Activated CD4-positive, alpha-beta T cell treated with anti-CD3 and anti-CD28 coated beads, Interleukin-2, amount 10 ng/mL, durations not matched to agents 24 days and 14 days (primary cell): ENCODE measurements at regions of chr13 and their contacts with region 1.

Region 1: DNA sequence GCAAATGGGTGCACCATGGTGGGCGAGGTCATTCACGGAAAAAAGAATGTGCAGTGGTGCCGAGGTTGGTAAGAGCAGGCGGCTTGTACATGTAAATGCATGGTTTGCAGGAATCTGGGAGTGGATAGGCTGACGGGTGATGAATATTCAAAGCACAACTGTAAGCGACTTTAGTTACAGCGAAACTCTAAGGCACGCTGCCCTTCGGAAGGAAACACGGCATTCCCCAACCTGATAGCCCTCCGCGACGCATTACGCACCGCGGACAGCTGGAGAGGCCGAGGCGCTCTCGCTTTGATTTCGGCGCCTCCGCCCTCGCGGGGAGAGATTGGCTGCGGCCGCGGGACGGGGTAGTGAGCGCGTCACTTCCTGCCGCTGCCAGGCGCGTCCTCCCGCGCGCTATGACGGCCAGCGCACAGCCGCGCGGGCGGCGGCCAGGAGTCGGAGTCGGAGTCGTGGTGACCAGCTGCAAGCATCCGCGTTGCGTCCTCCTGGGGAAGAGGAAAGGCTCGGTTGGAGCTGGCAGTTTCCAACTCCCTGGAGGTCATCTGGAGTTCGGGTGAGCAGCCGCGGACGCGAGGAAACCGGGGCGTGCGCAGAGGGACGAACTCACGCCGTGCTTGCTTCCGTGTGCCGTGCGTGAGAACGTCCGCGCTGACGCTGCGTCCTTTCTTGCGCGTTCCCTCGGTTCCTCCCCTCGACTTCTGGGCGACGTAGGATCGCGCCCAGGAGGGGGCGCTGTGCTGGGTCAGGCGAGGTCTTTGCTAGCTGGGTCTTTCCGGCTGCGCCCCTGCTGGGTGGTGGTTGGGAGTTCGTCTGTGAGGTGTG is at the start of gene NUDT15:
- DNase-seq: peak; percentile 99
- H3K4me3 Mint-ChIP-seq: peak within 1 kb of the TSS; percentile 98
- H3K27ac Mint-ChIP-seq: peak within 1 kb of the TSS; percentile 99
- H3K4me1 Mint-ChIP-seq: peaks cover 30% of the 10 kb centered on the region
- H3K27me3 Mint-ChIP-seq: no peaks in the 10 kb centered on the region
- total RNA-seq, gene NUDT15: 18.2 and 19.1 TPM in 2 replicates

Region 2: DNA sequence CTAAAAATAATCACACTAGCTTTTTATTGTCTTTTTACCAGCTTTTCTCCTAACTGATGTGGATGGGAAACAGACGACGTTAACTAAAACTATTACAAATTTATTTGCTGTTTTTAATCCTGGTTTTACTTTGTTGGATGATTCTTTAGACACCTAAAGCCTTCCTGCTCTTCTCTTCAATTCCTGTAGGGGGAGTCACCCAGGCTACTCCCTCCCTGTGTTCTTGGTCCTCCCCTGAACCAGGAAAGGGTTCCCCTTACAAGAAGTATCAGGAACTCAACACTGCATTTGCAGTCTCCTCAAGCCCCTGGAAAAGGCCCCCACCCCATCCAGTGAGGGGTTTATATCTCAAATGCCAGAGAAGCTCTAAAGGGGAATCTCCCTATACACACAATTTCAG is 242.6 kb before region 1 on chr13:
- intact Hi-C with region 1: no loop called
- DNase-seq: no peak
- H3K4me3 Mint-ChIP-seq: no peak overlapping the region
- H3K27ac Mint-ChIP-seq: no peak overlapping the region
- H3K4me1 Mint-ChIP-seq: no peaks in the 10 kb centered on the region
- H3K27me3 Mint-ChIP-seq: no peaks in the 10 kb centered on the region

Region 3: GRCh38 chr13:48000778-48001628 is 36.6 kb before region 1 on chr13 and contains the start of gene SUCLA2:
- intact Hi-C with region 1: loop called (anchors 1 kb)
- DNase-seq: peak; percentile 98
- H3K4me3 Mint-ChIP-seq: peak within 1 kb of the TSS; percentile 94
- H3K27ac Mint-ChIP-seq: peak within 1 kb of the TSS; percentile 91
- H3K4me1 Mint-ChIP-seq: peaks cover 25% of the 10 kb centered on the region
- H3K27me3 Mint-ChIP-seq: no peaks in the 10 kb centered on the region
- total RNA-seq, gene SUCLA2: 44.6 and 45.3 TPM in 2 replicates

Region 4: GRCh38 chr13:48094781-48095502 is 57.4 kb after region 1 on chr13 and contains the start of gene MED4:
- intact Hi-C with region 1: loop called (anchors 1 kb)
- DNase-seq: peak; percentile 100
- H3K4me3 Mint-ChIP-seq: peak within 1 kb of the TSS; percentile 92
- H3K27ac Mint-ChIP-seq: peak within 1 kb of the TSS; percentile 89
- H3K4me1 Mint-ChIP-seq: peaks cover 24% of the 10 kb centered on the region
- H3K27me3 Mint-ChIP-seq: peaks cover 7% of the 10 kb centered on the region
- total RNA-seq, gene MED4: 61.8 and 63.5 TPM in 2 replicates

Region 5: GRCh38 chr13:48303359-48304142 is 266.0 kb after region 1 on chr13 and contains the start of gene RB1:
- intact Hi-C with region 1: loop called (anchors 1 kb)
- DNase-seq: peak; percentile 97
- H3K4me3 Mint-ChIP-seq: peak within 1 kb of the TSS; percentile 87
- H3K27ac Mint-ChIP-seq: peak within 1 kb of the TSS; percentile 98
- H3K4me1 Mint-ChIP-seq: peaks cover 21% of the 10 kb centered on the region
- H3K27me3 Mint-ChIP-seq: no peaks in the 10 kb centered on the region
- total RNA-seq, gene RB1: 27.3 and 29.0 TPM in 2 replicates

Region 6: GRCh38 chr13:48532506-48533499 is 495.2 kb after region 1 on chr13 and contains the start of gene RCBTB2:
- intact Hi-C with region 1: loop called (anchors 1 kb)
- DNase-seq: peak; percentile 100
- H3K4me3 Mint-ChIP-seq: peak within 1 kb of the TSS; percentile 87
- H3K27ac Mint-ChIP-seq: peak within 1 kb of the TSS; percentile 96
- H3K4me1 Mint-ChIP-seq: peaks cover 26% of the 10 kb centered on the region
- H3K27me3 Mint-ChIP-seq: peaks cover 15% of the 10 kb centered on the region
- total RNA-seq, gene RCBTB2: 1.6 and 1.7 TPM in 2 replicates

Region 7: GRCh38 chr13:48653472-48653939 is 615.9 kb after region 1 on chr13 and contains the start of gene CYSLTR2:
- intact Hi-C with region 1: loop called (anchors 2 kb)
- DNase-seq: peak; percentile 84
- H3K4me3 Mint-ChIP-seq: peak within 1 kb of the TSS; percentile 88
- H3K27ac Mint-ChIP-seq: peak within 1 kb of the TSS; percentile 88
- H3K4me1 Mint-ChIP-seq: peaks cover 23% of the 10 kb centered on the region
- H3K27me3 Mint-ChIP-seq: no peaks in the 10 kb centered on the region
- total RNA-seq, gene CYSLTR2: 0.90 and 1.1 TPM in 2 replicates